PC-9 (cell line): ENCODE measurements at regions of chr2 and their contacts with region 1.

Region 1: GRCh38 chr2:72934683-72935610 is 17.6 kb downstream of the EMX1 start:
- DNase-seq: peak in 1 of 2 experiments; percentile 30
- H3K4me3 ChIP-seq: no peak overlapping the region
- H3K27ac ChIP-seq: no peak overlapping the region
- H3K4me1 ChIP-seq: no peaks in the 10 kb centered on the region
- H3K27me3 ChIP-seq: peaks cover 24% of the 10 kb centered on the region; the same call in 1 of the 2 replicates
- CTCF ChIP-seq: peak; percentile 73

Region 2: GRCh38 chr2:73156539-73157124 is 221.7 kb after region 1 on chr2:
- CTCF ChIA-PET with region 1: interaction called, 11 read pairs
- POLR2A ChIA-PET with region 1: no interaction called
- intact Hi-C with region 1: no loop called
- DNase-seq: peak in 1 of 2 experiments; percentile 34
- H3K4me3 ChIP-seq: no peak overlapping the region
- H3K27ac ChIP-seq: no peak overlapping the region
- H3K4me1 ChIP-seq: no peaks in the 10 kb centered on the region
- H3K27me3 ChIP-seq: peaks cover 23% of the 10 kb centered on the region
- CTCF ChIP-seq: peak; percentile 56